Naive thymus-derived CD4-positive, alpha-beta T cell (primary cell): ENCODE measurements at regions of chr1 and their contacts with region 1.

Region 1: DNA sequence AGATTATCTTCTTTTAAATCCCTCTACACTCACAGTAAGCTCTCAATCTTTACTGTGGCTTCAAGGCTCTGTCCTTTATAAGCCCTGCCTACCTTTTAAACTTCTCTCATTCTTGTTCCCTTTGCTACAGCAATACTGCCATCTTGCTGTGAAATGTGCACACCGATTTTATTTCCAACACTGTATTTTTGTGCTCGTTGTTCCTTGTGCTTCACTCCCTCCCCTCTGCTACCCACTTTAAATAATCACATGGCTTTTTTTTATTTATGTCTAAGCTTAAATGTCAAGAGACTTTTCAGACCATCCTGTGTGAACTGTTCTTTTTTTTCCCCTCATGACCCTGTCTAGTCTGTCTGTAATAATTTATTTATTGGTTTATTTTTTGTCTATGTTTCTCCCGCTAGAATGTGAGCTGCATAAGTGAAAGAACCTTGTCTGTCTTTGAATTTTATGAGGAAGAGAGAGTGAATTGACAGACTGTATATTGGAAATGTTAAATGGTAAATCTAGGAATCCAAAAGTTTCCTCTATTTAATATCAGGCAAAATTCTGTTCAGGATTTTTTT is 45.7 kb downstream of the ABCD3 start:
- DNase-seq: peak in 7 of 9 donors; percentile 20 to 56 (median 45)
- ATAC-seq: peak; percentile 64
- H3K4me3 ChIP-seq: no peak overlapping the region
- H3K4me3 Mint-ChIP-seq: no peak overlapping the region
- H3K27ac ChIP-seq: no peak overlapping the region
- H3K27ac Mint-ChIP-seq: peak overlapping the region in 1 of 9 donors; percentile 47
- H3K4me1 ChIP-seq: no peaks in the 10 kb centered on the region
- H3K4me1 Mint-ChIP-seq: peaks cover 0 to 14% (median 9%) of the 10 kb centered on the region in 7 donors
- H3K27me3 ChIP-seq: no peaks in the 10 kb centered on the region
- H3K27me3 Mint-ChIP-seq: no peaks in the 10 kb centered on the region

Region 2: DNA sequence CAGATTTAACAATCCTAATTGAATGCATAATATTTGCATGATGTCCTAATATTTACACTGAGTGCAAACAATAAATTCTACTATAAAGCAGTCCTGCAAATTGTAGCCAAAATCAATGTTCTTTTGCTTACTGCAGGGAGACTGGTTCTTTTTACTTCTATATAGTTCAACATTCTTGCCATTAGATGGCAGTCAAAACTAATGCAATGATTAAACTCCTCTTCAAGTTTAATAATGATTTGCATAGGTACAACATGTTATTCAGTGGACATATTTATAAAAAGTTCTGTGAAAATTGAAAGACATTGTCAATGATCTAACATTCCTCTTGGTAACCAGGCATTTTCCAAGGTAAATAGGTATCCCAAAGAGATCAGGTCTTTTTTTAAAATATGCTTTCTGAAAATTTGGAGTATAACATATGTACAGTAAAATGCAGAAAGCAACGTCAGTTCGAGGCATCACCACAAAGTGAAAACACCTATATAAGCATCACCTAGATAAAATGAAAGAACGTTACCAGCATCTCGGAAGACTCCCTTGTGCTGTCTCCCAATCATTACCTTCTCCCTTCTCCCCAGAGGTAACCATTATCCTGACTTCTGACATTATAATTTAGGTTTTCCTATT is 1025.8 kb before region 1 on chr1:
- CTCF ChIA-PET with region 1: no interaction called
- POLR2A ChIA-PET with region 1: no interaction called
- intact Hi-C with region 1: loop called in 1 of 2 experiments (anchors 1 kb)
- DNase-seq: peak in 5 of 9 donors; percentile 24 to 48 (median 27)
- ATAC-seq: peak; percentile 61
- H3K4me3 ChIP-seq: no peak overlapping the region
- H3K4me3 Mint-ChIP-seq: no peak overlapping the region
- H3K27ac ChIP-seq: no peak overlapping the region
- H3K27ac Mint-ChIP-seq: no peak overlapping the region
- H3K4me1 ChIP-seq: no peaks in the 10 kb centered on the region
- H3K4me1 Mint-ChIP-seq: peaks cover 0 to 2% (median 0%) of the 10 kb centered on the region in 7 donors
- H3K27me3 ChIP-seq: peaks cover 0 to 4% of the 10 kb centered on the region in 2 donors
- H3K27me3 Mint-ChIP-seq: peaks cover 0 to 35% (median 7%) of the 10 kb centered on the region in 5 donors

Region 3: DNA sequence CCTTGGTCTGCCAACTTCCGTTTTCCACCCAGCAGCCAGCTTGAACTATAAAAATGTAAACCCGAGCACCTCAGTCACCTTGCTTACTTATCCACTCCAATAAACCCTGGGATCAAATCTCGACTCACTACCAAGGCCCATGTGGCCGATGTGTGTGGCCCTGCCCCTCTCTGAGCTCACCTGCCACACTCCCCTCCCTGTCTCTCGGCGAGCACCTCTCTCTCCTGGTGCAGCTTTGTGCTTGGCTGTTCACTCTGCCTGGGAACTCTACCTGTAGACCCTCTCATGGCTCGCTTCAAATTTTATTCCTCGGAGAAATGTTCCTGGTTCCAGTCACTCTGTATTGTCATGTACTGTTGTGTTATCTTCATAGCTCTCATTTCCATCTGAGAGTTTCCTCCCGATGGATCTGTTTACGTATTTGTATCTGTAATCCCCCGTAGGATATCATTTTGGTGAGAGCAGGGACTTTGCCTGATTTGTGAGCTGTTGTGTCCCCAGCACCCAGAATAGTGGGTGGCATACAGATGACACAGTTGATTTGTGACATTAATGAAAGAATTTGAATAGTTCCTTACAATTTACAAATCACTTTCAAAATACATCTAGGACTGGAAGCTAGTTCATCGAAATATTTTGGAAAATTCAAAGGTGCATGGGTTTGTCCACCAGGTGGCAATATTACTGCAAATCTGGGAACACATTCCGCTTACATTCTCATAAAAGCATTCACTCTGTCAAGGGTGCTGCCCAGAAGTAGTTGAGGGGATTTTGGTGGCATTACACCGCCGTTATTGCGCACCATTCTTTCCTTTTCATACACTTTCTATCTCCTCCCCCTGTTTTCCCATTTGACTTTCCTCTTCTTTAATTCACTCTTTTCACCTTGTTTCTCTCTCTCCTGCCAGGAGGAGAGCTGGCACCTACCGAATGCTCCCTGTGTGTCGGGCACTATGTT is 438.2 kb before region 1 on chr1:
- CTCF ChIA-PET with region 1: interaction called, 19 read pairs
- POLR2A ChIA-PET with region 1: no interaction called
- intact Hi-C with region 1: no loop called
- DNase-seq: peak in 5 of 9 donors; percentile 5 to 19 (median 11)
- ATAC-seq: no peak
- H3K4me3 ChIP-seq: no peak overlapping the region
- H3K4me3 Mint-ChIP-seq: no peak overlapping the region
- H3K27ac ChIP-seq: no peak overlapping the region
- H3K27ac Mint-ChIP-seq: no peak overlapping the region
- H3K4me1 ChIP-seq: no peaks in the 10 kb centered on the region
- H3K4me1 Mint-ChIP-seq: peaks cover 0 to 12% (median 0%) of the 10 kb centered on the region in 7 donors
- H3K27me3 ChIP-seq: peaks cover 0 to 4% of the 10 kb centered on the region in 2 donors
- H3K27me3 Mint-ChIP-seq: peaks cover 6 to 8% (median 7%) of the 10 kb centered on the region in 5 donors

Region 4: DNA sequence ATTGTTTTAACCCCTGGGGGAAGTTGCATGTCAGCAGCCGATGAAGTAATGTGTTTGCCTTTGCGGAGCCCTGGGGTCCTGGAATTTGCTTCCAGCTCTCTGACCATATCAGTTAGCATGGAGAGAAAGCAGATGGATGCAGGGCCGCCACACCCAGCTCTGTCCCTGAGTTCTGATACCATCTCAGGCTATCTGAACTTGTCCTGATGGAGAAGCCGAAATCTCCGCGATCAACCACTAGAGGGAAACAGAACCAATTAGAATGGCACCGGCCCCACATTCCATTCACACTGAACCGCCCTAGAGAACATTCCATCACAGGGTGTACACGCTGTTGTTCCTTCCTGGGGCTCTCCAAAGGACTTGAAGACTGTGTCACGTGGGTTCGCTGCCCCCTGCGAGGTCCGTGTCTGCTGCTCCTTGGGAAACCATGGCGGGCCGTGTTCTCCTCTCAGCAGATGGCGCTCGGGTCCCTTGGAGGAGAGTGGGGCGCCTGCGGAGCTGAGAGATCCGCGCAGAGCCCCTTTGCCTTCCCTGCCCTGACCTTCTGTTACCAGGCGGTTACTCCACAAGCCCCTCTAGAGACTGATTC is 418.3 kb before region 1 on chr1:
- CTCF ChIA-PET with region 1: interaction called, 11 read pairs
- POLR2A ChIA-PET with region 1: interaction called, 3 read pairs
- intact Hi-C with region 1: loop called (anchors 1 kb)
- DNase-seq: peak in 6 of 9 donors; percentile 14 to 39 (median 20)
- ATAC-seq: peak; percentile 56
- H3K4me3 ChIP-seq: no peak overlapping the region
- H3K4me3 Mint-ChIP-seq: peak overlapping the region in 9 of 10 donors; percentile 25 to 77 (median 68)
- H3K27ac ChIP-seq: no peak overlapping the region
- H3K27ac Mint-ChIP-seq: no peak overlapping the region
- H3K4me1 ChIP-seq: no peaks in the 10 kb centered on the region
- H3K4me1 Mint-ChIP-seq: peaks cover 0 to 10% (median 5%) of the 10 kb centered on the region in 7 donors
- H3K27me3 ChIP-seq: no peaks in the 10 kb centered on the region
- H3K27me3 Mint-ChIP-seq: peaks cover 0 to 28% (median 24%) of the 10 kb centered on the region in 5 donors

Region 5: GRCh38 chr1:94237291-94238226 is 226.3 kb before region 1 on chr1 and contains the start of gene ARHGAP29:
- CTCF ChIA-PET with region 1: no interaction called
- POLR2A ChIA-PET with region 1: no interaction called
- intact Hi-C with region 1: loop called in 1 of 2 experiments (anchors 10 kb)
- DNase-seq: peak; percentile 6 to 63 (median 26)
- ATAC-seq: peak; percentile 83
- H3K4me3 ChIP-seq: peak within 1 kb of the TSS; percentile 22
- H3K4me3 Mint-ChIP-seq: peak within 1 kb of the TSS; percentile 50 to 85 (median 74)
- H3K27ac ChIP-seq: no peak within 1 kb of the TSS
- H3K27ac Mint-ChIP-seq: peak within 1 kb of the TSS in 1 of 9 donors; percentile 62
- H3K4me1 ChIP-seq: peaks cover 0 to 7% of the 10 kb centered on the region in 2 donors
- H3K4me1 Mint-ChIP-seq: peaks cover 8 to 17% (median 13%) of the 10 kb centered on the region in 7 donors
- H3K27me3 ChIP-seq: peaks cover 0 to 13% of the 10 kb centered on the region in 2 donors
- H3K27me3 Mint-ChIP-seq: peaks cover 77 to 82% (median 81%) of the 10 kb centered on the region in 5 donors
- total RNA-seq, gene ARHGAP29: 0.02 to 0.37 TPM in 2 of 5 experiments, not detected in the others

Region 6: DNA sequence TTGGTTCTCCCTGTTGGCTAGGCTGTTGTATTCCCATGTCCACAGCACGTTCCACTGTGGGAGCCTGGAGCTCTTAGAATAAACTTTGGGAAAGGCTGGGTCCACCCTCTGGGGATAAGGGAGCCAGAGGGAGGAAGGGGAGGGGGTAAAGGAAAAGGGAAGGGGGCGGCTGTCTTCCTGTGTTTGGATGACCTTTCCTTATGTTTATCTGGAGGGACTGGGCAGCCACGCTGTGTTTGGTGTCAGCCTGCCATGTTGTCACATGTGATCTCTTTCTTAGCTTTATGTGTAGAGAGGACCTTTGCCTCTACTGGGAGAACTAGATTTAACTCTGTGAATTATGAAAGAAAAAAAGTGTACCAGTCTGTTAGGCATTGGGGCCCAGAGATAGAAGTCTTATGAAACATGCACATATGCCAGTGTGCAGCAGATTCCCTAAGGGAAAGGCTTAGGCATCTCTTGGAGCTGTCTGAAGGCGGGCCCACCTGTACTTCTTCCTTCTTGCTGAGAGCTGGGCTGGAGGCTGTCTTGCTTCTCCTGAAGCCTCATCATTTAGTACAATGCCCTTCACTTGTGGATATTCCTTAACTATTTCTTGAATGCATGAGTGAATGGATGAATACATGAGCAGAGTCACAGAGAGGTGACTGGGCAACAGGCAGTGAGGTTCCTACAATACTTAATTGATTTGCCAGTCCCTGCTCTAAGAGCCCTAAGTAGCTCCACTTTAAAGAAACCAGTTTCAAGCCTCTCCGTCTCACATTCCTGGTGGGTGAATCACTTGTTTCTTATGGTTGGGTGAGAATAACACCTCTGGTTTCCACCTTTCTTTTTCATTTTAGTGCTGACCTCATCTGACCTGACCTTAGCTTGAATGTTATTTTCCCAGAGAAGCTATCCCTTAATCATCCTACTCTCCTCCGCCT is 164.0 kb before region 1 on chr1:
- CTCF ChIA-PET with region 1: no interaction called
- POLR2A ChIA-PET with region 1: no interaction called
- intact Hi-C with region 1: no loop called
- DNase-seq: no peak
- ATAC-seq: no peak
- H3K4me3 ChIP-seq: no peak overlapping the region
- H3K4me3 Mint-ChIP-seq: no peak overlapping the region
- H3K27ac ChIP-seq: no peak overlapping the region
- H3K27ac Mint-ChIP-seq: no peak overlapping the region
- H3K4me1 ChIP-seq: no peaks in the 10 kb centered on the region
- H3K4me1 Mint-ChIP-seq: peaks cover 0 to 9% (median 0%) of the 10 kb centered on the region in 7 donors
- H3K27me3 ChIP-seq: no peaks in the 10 kb centered on the region
- H3K27me3 Mint-ChIP-seq: peaks cover 0 to 44% (median 18%) of the 10 kb centered on the region in 5 donors